ENCODE measurements at regions of chr1 and their contacts with region 1.

Region 1: GRCh38 chr1:20212685-20213331 is 26.5 kb upstream of the PLA2G2C start:
- DNase-seq: peak; percentile 50 to 66
- ATAC-seq: peak; percentile 60 to 83 (median 70)
- H3K4me3 ChIP-seq: no peak overlapping the region
- H3K27ac ChIP-seq: no peak overlapping the region
- H3K4me1 ChIP-seq: peaks cover 0 to 11% (median 8%) of the 10 kb centered on the region in 9 donors
- H3K27me3 ChIP-seq: peaks cover 0 to 62% (median 40%) of the 10 kb centered on the region in 7 donors
- CTCF ChIP-seq: peak; percentile 75 to 88 (median 79)

Region 2: GRCh38 chr1:20367116-20367585 is 154.3 kb after region 1 on chr1:
- intact Hi-C with region 1: loop called in 2 of 10 experiments (anchors 5 to 10 kb)
- DNase-seq: peak; percentile 40 to 41
- ATAC-seq: peak; percentile 46 to 84 (median 68)
- H3K4me3 ChIP-seq: peak overlapping the region in 9 of 10 donors; percentile 26 to 53 (median 42)
- H3K27ac ChIP-seq: peak overlapping the region in 1 of 10 donors; percentile 47
- H3K4me1 ChIP-seq: peaks cover 0 to 24% (median 9%) of the 10 kb centered on the region in 9 donors
- H3K27me3 ChIP-seq: peaks cover 0 to 82% (median 68%) of the 10 kb centered on the region in 7 donors
- CTCF ChIP-seq: peak; percentile 13 to 61 (median 45)

Measured in heart right ventricle (tissue), 16 donors.